KBM-7 (cell line): ENCODE measurements at regions of chr5 and their contacts with region 1.

Region 1: DNA sequence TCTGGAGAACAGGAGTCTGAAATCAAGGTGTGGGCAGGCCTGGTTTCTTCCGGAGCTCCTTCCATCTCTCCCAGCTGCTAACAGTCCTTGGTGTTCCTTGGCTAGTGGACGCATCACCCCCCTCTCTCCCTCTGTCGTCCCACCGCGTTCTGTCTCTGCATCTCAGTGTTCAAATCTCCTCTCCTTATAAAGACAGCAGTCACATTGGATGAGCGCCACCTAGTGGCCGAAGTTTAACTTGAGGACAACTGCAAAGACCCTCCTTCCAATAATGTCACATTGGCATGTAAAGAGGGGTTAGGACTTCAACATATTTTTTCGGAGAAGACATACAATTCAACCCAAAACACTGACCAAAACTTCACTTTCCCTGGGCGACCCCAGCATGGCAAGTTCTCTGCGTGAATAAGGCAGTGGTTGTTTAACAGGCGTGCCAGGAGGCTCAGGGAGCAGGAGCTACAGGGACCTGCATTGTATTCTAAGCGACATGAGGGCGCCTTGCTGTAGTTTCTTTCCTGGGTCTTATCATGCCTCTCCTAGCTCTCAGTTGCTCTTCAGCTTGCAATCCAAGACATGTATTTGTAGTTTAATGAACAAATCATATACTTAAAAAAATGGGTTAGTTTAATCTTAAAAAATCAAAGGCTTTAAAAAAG is 27.9 kb upstream of the BASP1 start:
- DNase-seq: peak; percentile 77

Region 2: GRCh38 chr5:16489322-16489791 is 700.2 kb before region 1 on chr5:
- in situ Hi-C with region 1: loop called (anchors 25 kb)
- DNase-seq: peak; percentile 24

Region 3: DNA sequence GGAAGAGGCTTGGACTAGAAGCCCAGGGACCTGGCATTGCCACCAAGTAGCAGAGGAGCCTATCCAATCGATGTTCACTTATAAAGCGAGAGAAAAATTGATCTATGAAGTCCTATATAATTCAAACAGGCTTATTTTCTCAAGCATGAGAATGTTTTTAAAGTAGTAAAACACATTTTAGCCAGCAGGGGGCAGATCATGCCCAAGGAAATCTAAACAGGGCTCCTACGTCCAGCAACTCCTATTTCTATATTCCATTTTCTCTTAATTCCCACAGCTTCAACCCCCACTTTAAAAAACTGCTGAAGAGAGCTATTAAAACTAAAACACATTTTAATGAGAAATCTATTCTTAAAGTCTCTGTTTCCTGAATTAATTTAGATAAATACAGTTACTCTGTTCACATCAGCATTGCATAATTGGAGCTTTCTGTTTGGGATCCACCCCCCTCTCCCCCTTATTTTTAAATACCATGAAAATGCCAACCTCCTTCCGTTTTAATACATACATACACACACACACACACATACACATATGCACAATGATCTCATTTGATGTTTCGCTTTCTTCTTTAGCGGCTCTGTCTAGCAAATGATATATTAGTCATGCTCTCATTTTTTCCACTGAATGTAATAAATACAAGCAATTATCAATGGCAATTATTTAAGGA is 398.3 kb before region 1 on chr5:
- in situ Hi-C with region 1: loop called (anchors 25 kb)
- DNase-seq: peak; percentile 64

Region 4: GRCh38 chr5:16934123-16934522 is 255.4 kb before region 1 on chr5:
- in situ Hi-C with region 1: loop called (anchors 25 kb)
- DNase-seq: peak; percentile 72

Region 5: GRCh38 chr5:17096952-17097695 is 92.4 kb before region 1 on chr5:
- in situ Hi-C with region 1: no loop called
- DNase-seq: no peak